Sigmoid colon (tissue), 7 donors: ENCODE measurements at regions of chr11 and their contacts with region 1.

Region 1: GRCh38 chr11:131168839-131169713 is 201.3 kb upstream of the NTM start:
- DNase-seq: no peak
- H3K4me3 ChIP-seq: no peak overlapping the region
- H3K27ac ChIP-seq: peak overlapping the region in 3 of 4 donors; percentile 62 to 72 (median 67)
- H3K4me1 ChIP-seq: peaks cover 0 to 71% (median 41%) of the 10 kb centered on the region in 4 donors
- H3K27me3 ChIP-seq: no peaks in the 10 kb centered on the region
- CTCF ChIP-seq: no peak
- EP300 ChIP-seq: peak in 3 of 4 donors; percentile 4 to 41 (median 25)
- POLR2A ChIP-seq: no peak

Region 2: GRCh38 chr11:130390071-130390758 is 778.9 kb before region 1 on chr11:
- intact Hi-C with region 1: loop called (anchors 10 kb)
- DNase-seq: no peak
- H3K4me3 ChIP-seq: no peak overlapping the region
- H3K27ac ChIP-seq: peak overlapping the region; percentile 66 to 78 (median 76)
- H3K4me1 ChIP-seq: peaks cover 0 to 50% (median 44%) of the 10 kb centered on the region in 4 donors
- H3K27me3 ChIP-seq: no peaks in the 10 kb centered on the region
- CTCF ChIP-seq: peak in 3 of 4 experiments; percentile 4 to 37 (median 35)
- EP300 ChIP-seq: peak; percentile 26 to 92 (median 75)
- POLR2A ChIP-seq: no peak

Region 3: GRCh38 chr11:130904380-130904779 is 264.7 kb before region 1 on chr11:
- intact Hi-C with region 1: loop called (anchors 10 kb)
- DNase-seq: no peak
- H3K4me3 ChIP-seq: no peak overlapping the region
- H3K27ac ChIP-seq: peak overlapping the region in 3 of 4 donors; percentile 43 to 95 (median 91)
- H3K4me1 ChIP-seq: peaks cover 0 to 50% (median 35%) of the 10 kb centered on the region in 4 donors
- H3K27me3 ChIP-seq: no peaks in the 10 kb centered on the region
- CTCF ChIP-seq: peak in 3 of 4 experiments; percentile 14 to 36 (median 26)
- EP300 ChIP-seq: no peak
- POLR2A ChIP-seq: no peak

Region 4: GRCh38 chr11:131064373-131064991 is 104.6 kb before region 1 on chr11:
- intact Hi-C with region 1: loop called (anchors 10 kb)
- DNase-seq: no peak
- H3K4me3 ChIP-seq: no peak overlapping the region
- H3K27ac ChIP-seq: no peak overlapping the region
- H3K4me1 ChIP-seq: peaks cover 0 to 8% (median 3%) of the 10 kb centered on the region in 4 donors
- H3K27me3 ChIP-seq: no peaks in the 10 kb centered on the region
- CTCF ChIP-seq: peak; percentile 64 to 88 (median 74)
- EP300 ChIP-seq: no peak
- POLR2A ChIP-seq: no peak

Region 5: GRCh38 chr11:131195661-131196517 is 26.8 kb after region 1 on chr11:
- intact Hi-C with region 1: loop called (anchors 1 kb)
- DNase-seq: peak; percentile 87
- H3K4me3 ChIP-seq: peak overlapping the region in 3 of 4 donors; percentile 10 to 20 (median 13)
- H3K27ac ChIP-seq: peak overlapping the region in 3 of 4 donors; percentile 74 to 77 (median 75)
- H3K4me1 ChIP-seq: peaks cover 0 to 56% (median 48%) of the 10 kb centered on the region in 4 donors
- H3K27me3 ChIP-seq: no peaks in the 10 kb centered on the region
- CTCF ChIP-seq: no peak
- EP300 ChIP-seq: peak in 1 of 4 donors; percentile 2
- POLR2A ChIP-seq: no peak

Region 6: DNA sequence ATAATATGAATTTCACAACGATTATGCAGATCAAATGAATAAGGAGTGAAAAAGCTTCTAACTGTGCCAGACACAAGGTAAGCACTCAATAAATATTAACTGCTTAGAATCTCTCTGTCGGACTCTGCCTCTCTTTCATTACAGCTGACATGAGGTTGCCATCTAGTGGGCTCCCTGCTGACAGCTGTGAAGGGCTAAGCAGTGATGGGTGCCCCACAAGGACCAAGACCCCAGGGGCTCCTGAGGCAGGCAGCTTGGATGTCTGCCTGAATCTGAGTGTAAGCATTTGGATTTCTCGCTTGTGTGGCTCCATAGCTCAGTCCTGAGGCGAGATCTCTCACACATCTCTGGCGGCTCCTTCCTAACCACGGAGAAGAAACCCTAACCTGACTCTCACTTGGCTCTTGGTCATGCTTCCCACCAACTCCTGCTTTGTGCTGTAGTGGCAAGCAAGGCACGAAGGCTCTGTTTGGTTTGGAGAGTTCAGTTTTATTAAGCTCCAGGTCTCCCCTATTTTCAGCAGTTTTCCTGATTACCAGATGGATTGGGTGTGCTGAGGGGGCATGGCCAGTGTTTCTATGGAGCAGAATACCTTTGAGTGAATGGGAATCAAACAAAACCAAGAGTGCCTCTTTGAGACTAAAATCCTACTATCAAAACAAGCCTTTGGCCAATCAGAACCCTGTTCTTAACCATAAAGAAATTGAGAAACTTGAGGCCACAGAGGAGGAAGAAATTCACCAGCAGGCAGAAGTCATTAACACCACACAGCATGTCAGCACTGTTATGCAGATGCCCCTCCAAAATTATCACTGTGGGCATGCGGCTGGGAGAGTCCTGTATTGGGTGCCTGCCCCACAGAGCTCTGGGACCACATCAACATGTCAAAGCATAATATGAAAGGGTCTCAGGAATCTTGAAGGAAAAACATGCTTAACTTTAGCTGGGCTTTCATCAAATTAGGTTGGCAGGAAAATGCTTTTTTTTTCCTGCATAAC is 48.5 kb after region 1 on chr11:
- intact Hi-C with region 1: loop called (anchors 5 kb)
- DNase-seq: no peak
- H3K4me3 ChIP-seq: no peak overlapping the region
- H3K27ac ChIP-seq: no peak overlapping the region
- H3K4me1 ChIP-seq: no peaks in the 10 kb centered on the region
- H3K27me3 ChIP-seq: no peaks in the 10 kb centered on the region
- CTCF ChIP-seq: peak in 2 of 4 experiments; percentile 30 to 51
- EP300 ChIP-seq: no peak
- POLR2A ChIP-seq: no peak

Region 7: GRCh38 chr11:131495423-131495822 is 326.3 kb after region 1 on chr11:
- intact Hi-C with region 1: loop called (anchors 5 kb)
- DNase-seq: peak; percentile 89
- H3K4me3 ChIP-seq: no peak overlapping the region
- H3K27ac ChIP-seq: peak overlapping the region in 3 of 4 donors; percentile 40 to 59 (median 49)
- H3K4me1 ChIP-seq: peaks cover 0 to 23% (median 12%) of the 10 kb centered on the region in 4 donors
- H3K27me3 ChIP-seq: no peaks in the 10 kb centered on the region
- CTCF ChIP-seq: no peak
- EP300 ChIP-seq: no peak
- POLR2A ChIP-seq: no peak